ENCODE measurements at regions of chr14 and their contacts with region 1.

Region 1: DNA sequence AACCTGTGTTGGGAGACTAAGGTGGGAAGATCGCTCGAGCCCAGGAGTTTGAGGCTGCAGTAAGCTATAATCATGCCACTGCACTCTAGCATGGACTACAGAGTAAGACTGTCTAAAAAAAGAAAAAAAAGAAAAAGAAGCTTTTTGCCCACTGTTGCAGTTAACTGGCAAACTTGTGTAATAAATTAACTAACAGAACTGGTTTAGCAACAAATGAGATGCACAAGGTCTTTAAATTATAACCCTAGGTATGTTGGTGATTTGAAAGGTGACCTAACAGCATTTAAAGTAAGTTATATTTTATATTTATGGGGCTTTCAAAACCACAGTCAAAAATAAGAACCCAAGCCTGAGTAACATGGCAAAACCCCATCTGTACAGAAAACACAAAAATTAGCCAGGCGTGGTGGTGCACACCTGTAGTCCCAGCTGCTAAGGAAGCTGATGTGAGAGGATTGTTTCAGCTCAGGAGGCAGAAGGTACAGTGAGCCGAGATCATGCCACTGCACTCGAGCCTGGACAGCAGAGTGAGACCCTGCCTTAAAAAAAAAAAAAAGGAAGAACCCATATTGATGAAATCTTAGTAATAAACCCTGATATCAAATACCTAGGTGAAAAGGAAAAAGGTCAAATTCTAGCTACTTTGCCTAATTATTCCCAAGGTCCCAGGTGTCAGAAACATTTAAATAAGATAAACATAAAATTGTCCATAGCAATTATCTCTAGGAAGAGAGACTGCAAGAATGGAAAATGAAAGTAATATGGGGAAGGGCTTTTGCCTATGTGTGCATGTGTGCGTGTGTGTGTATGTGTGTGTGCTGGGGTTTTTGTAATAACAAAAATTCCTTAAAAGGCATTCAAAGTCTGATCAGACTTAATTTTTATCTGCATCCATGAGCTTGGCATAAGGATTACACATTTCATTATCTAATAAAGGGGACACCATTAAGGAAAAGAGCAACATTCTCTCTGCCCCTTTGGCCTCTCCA is 15.4 kb downstream of the SYNE2 start:
- DNase-seq: peak in 1 of 2 experiments; percentile 79
- H3K4me3 ChIP-seq: no peak overlapping the region
- H3K27ac ChIP-seq: peak overlapping the region; percentile 23; the same call in 1 of the 2 replicates
- H3K4me1 ChIP-seq: peaks cover 52% of the 10 kb centered on the region
- H3K27me3 ChIP-seq: no peaks in the 10 kb centered on the region
- CTCF ChIP-seq: no peak

Region 2: DNA sequence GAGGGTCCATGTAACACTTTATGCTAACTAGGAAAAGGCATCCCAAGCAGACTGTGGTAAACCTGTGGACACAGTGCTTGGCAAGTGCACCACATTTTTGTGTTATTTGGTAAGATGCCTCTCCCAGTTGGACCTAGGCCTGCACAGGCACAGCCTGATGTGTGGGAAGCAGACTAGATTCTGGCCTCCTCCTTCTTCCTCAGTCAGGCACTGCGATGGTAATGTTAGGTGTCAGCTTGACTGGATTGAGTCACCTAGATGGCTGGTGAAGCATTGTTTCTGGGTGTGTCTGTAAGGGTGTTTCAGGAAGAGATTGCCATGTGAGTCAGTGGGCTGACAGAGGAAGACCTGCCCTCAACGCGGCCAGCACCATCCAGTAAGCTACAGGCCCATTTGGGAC is 689.3 kb before region 1 on chr14:
- CTCF ChIA-PET with region 1: no interaction called
- POLR2A ChIA-PET with region 1: no interaction called
- intact Hi-C with region 1: no loop called
- DNase-seq: peak in 1 of 2 experiments; percentile 68
- H3K4me3 ChIP-seq: no peak overlapping the region
- H3K27ac ChIP-seq: no peak overlapping the region
- H3K4me1 ChIP-seq: no peaks in the 10 kb centered on the region
- H3K27me3 ChIP-seq: no peaks in the 10 kb centered on the region
- CTCF ChIP-seq: no peak

Region 3: GRCh38 chr14:63655789-63656573 is 212.2 kb before region 1 on chr14:
- CTCF ChIA-PET with region 1: no interaction called
- POLR2A ChIA-PET with region 1: interaction called, 12 read pairs
- intact Hi-C with region 1: no loop called
- DNase-seq: peak in 1 of 2 experiments; percentile 94
- H3K4me3 ChIP-seq: no peak overlapping the region
- H3K27ac ChIP-seq: peak overlapping the region; percentile 66
- H3K4me1 ChIP-seq: peaks cover 33% of the 10 kb centered on the region
- H3K27me3 ChIP-seq: no peaks in the 10 kb centered on the region
- CTCF ChIP-seq: no peak

Region 4: DNA sequence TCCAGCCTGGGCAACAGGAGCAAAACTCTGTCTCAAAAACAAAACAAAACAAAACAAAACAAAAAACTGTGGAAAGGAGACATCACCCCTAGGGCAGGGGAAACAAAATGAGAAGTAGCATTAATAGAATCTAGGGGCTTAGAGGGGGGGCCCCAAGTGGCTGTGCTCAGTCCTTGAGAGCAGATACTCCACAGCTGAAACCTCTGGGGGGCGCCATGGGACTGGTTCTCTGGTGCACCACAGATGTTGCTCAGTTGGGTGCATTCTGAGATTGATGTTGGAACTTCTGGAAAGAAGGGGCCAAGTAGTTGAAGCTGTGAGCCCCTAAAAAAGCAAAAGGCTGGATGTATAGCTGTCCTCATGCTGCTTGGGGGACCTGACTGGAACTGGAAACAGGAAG is 27.2 kb before region 1 on chr14:
- CTCF ChIA-PET with region 1: no interaction called
- POLR2A ChIA-PET with region 1: no interaction called
- intact Hi-C with region 1: no loop called
- DNase-seq: no peak
- H3K4me3 ChIP-seq: no peak overlapping the region
- H3K27ac ChIP-seq: no peak overlapping the region
- H3K4me1 ChIP-seq: no peaks in the 10 kb centered on the region
- H3K27me3 ChIP-seq: no peaks in the 10 kb centered on the region
- CTCF ChIP-seq: peak; percentile 32; the same call in 1 of the 2 replicates

Region 5: DNA sequence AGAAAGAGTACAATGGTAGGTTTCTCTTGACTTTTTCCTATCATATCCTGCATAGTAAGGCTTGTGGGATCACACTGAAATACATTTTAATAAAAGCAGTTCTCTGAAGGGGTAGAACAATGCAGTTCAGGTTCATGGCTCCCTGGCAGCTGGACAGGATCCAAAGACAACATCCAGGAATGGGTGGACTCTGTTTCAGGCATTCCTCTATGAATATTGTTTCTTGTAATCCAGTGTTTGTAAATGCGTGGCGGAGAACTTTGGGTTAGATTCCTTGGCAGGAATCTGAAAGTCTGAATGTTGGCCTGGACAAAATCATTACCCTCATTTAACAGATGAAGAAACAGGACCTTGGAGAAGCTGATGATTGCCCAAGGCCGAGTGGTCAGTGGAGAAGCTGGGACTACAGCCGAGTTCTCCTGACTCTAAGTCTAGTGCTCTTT is 28.1 kb after region 1 on chr14:
- CTCF ChIA-PET with region 1: no interaction called
- POLR2A ChIA-PET with region 1: interaction called, 3 read pairs
- intact Hi-C with region 1: loop called (anchors 1 kb)
- DNase-seq: peak; percentile 84 to 86
- H3K4me3 ChIP-seq: no peak overlapping the region
- H3K27ac ChIP-seq: peak overlapping the region; percentile 1
- H3K4me1 ChIP-seq: peaks cover 14% of the 10 kb centered on the region
- H3K27me3 ChIP-seq: no peaks in the 10 kb centered on the region
- CTCF ChIP-seq: no peak

Region 6: GRCh38 chr14:63986789-63987533 is 118.7 kb after region 1 on chr14:
- CTCF ChIA-PET with region 1: interaction called, 14 read pairs
- POLR2A ChIA-PET with region 1: no interaction called
- intact Hi-C with region 1: no loop called
- DNase-seq: peak in 1 of 2 experiments; percentile 59
- H3K4me3 ChIP-seq: no peak overlapping the region
- H3K27ac ChIP-seq: 0 out of 2 replicates have a peak overlapping the region, but pooled peaks have one; percentile 19
- H3K4me1 ChIP-seq: no peaks in the 10 kb centered on the region
- H3K27me3 ChIP-seq: no peaks in the 10 kb centered on the region
- CTCF ChIP-seq: no peak

Measured in PC-9 (cell line).